ENCODE measurements at regions of chr11 and their contacts with region 1.

Region 1: DNA sequence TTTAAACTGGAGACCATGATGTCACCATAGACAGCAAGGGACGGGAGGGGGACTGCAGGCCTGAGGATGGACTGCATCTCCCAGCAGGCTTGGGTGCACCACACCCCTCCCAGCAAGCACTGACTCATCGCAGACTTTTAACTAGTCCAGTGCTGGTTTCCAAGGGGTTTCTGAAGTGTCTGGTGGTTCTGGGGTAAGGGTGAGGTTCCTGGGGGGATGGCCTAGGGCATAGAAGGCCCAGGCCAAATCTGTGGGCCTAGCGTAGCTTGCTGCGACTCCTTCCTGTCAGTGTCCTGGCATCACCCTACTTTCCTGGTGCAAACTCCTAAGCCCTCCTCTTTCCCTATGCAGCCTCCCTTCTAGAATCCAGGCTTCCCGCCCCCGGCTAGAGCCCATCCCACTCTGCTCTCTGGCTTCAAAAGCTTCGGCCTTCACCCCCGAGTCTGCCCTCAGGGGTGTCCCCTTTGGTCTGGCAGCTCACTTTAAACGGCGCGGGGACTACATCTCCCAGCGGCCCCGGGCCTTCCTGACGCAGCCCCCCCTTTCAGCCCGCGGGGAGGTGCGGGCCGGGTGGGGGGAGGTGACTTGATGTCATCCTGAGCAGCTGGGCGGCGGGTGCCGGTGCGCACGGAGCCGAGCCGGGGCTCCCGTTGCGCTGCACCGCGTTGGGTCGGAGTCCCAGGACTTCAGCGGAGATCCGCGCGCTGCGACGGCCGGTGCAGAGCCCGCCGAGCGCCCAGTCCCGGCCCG is at the start of gene PPP2R5B:
- DNase-seq: peak; percentile 95
- ATAC-seq: peak; percentile 95
- H3K4me3 Mint-ChIP-seq: peak within 1 kb of the TSS; percentile 81
- H3K27ac Mint-ChIP-seq: peak within 1 kb of the TSS; percentile 98
- H3K4me1 Mint-ChIP-seq: peaks cover 9% of the 10 kb centered on the region
- H3K27me3 Mint-ChIP-seq: no peaks in the 10 kb centered on the region
- total RNA-seq, gene PPP2R5B: 13.2 to 13.5 TPM

Region 2: GRCh38 chr11:64803163-64803845 is 121.0 kb before region 1 on chr11 and contains the start of gene MAP4K2:
- CTCF ChIA-PET with region 1: interaction called, 3 read pairs
- POLR2A ChIA-PET with region 1: no interaction called
- intact Hi-C with region 1: loop called in 1 of 2 experiments (anchors 1 kb)
- DNase-seq: peak; percentile 92
- ATAC-seq: peak; percentile 93
- H3K4me3 Mint-ChIP-seq: peak within 1 kb of the TSS; percentile 75
- H3K27ac Mint-ChIP-seq: peak within 1 kb of the TSS; percentile 90
- H3K4me1 Mint-ChIP-seq: peaks cover 27% of the 10 kb centered on the region
- H3K27me3 Mint-ChIP-seq: no peaks in the 10 kb centered on the region
- total RNA-seq, gene MAP4K2: 54.0 to 57.3 TPM

Region 3: DNA sequence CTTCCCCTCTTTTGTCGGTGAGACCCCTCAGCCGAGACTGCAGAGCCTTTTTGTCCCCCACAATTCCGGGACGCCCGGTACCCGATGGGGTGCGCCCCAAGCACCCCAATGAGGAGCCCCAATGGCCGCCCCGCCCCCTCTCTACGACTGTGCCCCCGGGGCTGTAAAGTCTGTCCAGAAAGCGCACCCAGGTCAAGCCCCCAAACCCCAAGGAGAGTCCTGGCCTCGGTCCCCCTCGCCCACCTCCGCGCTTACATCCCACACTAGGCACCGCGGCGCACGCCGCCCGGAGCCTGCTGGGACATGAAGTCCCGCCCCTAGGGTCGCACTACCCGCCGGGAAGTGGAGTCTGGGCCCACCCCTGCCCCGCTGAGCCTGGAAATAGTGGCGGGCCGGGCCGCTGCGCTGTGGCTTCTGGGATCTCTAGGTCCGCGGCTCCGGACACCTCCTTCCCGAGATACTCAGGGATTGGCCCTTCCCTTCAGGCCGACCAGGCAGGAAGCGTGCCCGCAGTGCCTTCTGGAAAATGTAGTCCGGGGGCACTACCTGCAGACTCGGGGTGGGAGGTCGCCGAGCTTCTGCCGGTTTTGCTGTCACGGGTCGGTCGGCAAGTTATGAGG is 113.9 kb before region 1 on chr11 and contains the start of gene MEN1:
- CTCF ChIA-PET with region 1: no interaction called
- POLR2A ChIA-PET with region 1: interaction called, 3 read pairs
- intact Hi-C with region 1: loop called in 1 of 2 experiments (anchors 1 kb)
- DNase-seq: peak; percentile 92
- ATAC-seq: peak; percentile 95
- H3K4me3 Mint-ChIP-seq: peak within 1 kb of the TSS; percentile 93
- H3K27ac Mint-ChIP-seq: peak within 1 kb of the TSS; percentile 85
- H3K4me1 Mint-ChIP-seq: peaks cover 21% of the 10 kb centered on the region
- H3K27me3 Mint-ChIP-seq: no peaks in the 10 kb centered on the region
- total RNA-seq, gene MEN1: 34.8 to 38.5 TPM

Region 4: GRCh38 chr11:64947208-64947814 is 23.0 kb after region 1 on chr11:
- CTCF ChIA-PET with region 1: no interaction called
- POLR2A ChIA-PET with region 1: no interaction called
- intact Hi-C with region 1: no loop called
- DNase-seq: no peak
- ATAC-seq: no peak
- H3K4me3 Mint-ChIP-seq: no peak overlapping the region
- H3K27ac Mint-ChIP-seq: no peak overlapping the region
- H3K4me1 Mint-ChIP-seq: no peaks in the 10 kb centered on the region
- H3K27me3 Mint-ChIP-seq: peaks cover 3% of the 10 kb centered on the region

Region 5: DNA sequence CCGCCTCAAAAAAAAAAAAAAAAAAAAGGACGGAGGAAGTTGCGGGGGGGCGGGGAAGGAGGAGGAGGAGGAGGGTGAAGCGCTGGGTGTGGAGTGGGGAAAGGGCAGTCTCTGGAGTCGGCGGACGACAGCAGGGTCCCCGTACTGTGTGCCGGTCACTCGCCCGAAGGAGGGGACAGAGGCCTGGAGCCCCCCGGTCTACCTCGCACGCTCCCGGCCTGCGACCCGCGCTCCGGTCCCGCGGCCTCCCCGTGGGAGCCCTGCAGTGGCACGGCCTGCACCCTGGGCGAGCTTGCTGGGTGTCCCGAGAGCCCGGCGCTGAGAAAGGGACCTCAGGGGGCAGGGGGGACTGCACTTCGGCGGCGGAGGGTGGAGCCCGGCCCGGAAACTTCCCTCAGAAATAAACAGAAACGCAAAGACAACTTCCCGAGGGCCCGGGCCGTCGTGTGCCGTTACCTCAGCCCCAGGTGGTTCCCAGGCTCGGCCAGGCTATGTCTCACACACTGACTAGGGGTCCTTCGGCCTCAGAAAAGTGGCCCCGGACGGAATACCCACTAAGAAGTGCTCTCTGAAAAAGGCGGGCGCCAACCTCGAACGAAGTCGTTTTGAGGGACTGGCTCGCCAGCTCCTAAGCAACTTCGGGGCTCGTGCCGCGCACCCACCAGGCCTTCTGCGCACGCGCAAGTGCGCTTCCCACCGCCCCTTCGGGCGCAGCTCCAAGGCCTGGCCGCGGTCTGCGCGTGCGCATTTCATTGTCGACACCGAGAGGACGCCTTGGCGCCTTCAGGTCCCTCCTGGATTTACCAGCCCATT is 47.4 kb after region 1 on chr11 and contains the start of gene MAJIN:
- CTCF ChIA-PET with region 1: no interaction called
- POLR2A ChIA-PET with region 1: no interaction called
- intact Hi-C with region 1: loop called (anchors 1 to 5 kb)
- DNase-seq: peak; percentile 96
- ATAC-seq: peak; percentile 48
- H3K4me3 Mint-ChIP-seq: peak within 1 kb of the TSS; percentile 63
- H3K27ac Mint-ChIP-seq: peak within 1 kb of the TSS; percentile 94
- H3K4me1 Mint-ChIP-seq: peaks cover 42% of the 10 kb centered on the region
- H3K27me3 Mint-ChIP-seq: no peaks in the 10 kb centered on the region
- total RNA-seq, gene MAJIN: 1.2 to 1.6 TPM

Region 6: GRCh38 chr11:65027213-65028067 is 103.2 kb after region 1 on chr11 and contains the start of gene SNX15:
- CTCF ChIA-PET with region 1: no interaction called
- POLR2A ChIA-PET with region 1: no interaction called
- intact Hi-C with region 1: loop called (anchors 1 kb)
- DNase-seq: peak; percentile 94
- ATAC-seq: peak; percentile 91
- H3K4me3 Mint-ChIP-seq: peak within 1 kb of the TSS; percentile 73
- H3K27ac Mint-ChIP-seq: peak within 1 kb of the TSS; percentile 86
- H3K4me1 Mint-ChIP-seq: peaks cover 21% of the 10 kb centered on the region
- H3K27me3 Mint-ChIP-seq: no peaks in the 10 kb centered on the region
- total RNA-seq, gene SNX15: 12.1 to 14.2 TPM

Region 7: GRCh38 chr11:65180877-65181568 is 256.7 kb after region 1 on chr11:
- CTCF ChIA-PET with region 1: no interaction called
- POLR2A ChIA-PET with region 1: no interaction called
- intact Hi-C with region 1: loop called in 1 of 2 experiments (anchors 1 kb)
- DNase-seq: peak; percentile 79
- ATAC-seq: peak; percentile 74
- H3K4me3 Mint-ChIP-seq: peak overlapping the region; percentile 79
- H3K27ac Mint-ChIP-seq: peak overlapping the region; percentile 80
- H3K4me1 Mint-ChIP-seq: peaks cover 14% of the 10 kb centered on the region
- H3K27me3 Mint-ChIP-seq: no peaks in the 10 kb centered on the region